Left ventricle myocardium superior (tissue), 1 donor: ENCODE measurements at regions of chr11 and their contacts with region 1.

Region 1: DNA sequence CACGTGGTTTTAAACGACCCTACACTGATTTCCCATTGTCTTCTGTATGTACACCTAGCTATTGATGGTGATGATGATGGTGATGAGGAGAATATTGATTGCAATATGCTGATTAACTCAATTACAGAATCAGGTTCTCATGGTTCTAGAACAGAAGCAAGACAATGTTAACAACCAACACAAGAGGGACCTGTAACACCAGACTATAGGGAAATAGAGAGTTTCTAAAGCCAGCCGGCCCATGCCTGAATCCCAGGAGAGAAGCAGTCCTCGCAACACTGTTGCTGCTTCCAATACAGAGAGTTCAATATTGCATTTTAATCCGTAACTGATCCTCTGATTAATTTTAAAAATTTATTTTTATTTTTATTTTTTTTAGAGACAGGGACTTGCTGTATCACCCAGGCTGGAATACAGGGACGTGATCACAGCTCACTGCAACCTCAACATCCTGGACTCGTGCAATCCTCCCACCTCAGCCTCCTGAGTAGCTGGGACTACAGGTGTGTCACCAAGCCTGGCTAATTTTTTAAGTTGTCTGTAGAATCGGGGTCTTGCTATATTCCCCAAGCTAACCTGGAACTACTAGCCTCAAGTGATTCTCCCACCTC is 22.2 kb upstream of the UBASH3B start:
- DNase-seq: no peak
- ATAC-seq: peak; percentile 61

Region 2: DNA sequence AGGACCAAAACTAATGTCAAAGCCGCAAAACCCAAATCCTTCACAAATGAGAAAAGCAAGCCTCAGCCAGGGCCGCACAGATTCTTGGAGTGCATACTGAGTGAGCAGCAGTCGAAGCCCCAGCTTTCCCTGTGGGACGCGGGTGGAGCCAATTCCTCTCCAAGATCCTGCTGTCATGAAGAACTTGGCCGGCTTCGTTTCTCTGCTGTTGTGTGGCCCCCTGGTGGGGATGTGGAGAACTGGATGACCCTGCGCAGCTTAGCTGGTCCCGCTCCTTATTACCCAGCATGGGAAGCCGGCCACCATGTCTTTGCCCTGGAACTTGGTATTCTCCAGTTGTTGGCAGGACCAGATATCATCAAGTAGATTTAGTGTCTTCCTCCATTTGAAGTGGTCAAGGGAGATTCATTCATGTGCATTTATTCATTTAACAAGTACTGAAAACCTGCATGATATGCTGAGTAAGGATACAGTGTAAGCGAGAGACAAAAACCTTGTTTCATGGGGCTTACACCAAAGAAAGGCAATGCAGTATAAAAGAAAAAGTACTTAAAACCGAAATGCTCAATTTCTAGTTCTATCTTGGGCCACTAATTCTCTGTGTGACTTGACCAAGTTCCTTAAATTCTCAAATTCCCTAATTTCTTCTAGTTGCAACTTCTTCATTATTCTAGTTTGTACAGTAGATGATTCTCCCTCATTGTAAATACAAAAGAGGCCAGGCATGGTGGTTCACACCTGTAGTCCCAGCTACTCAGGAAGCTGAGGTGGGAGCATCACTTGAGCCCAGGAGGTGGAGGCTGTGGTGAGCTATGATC is 148.3 kb after region 1 on chr11:
- intact Hi-C with region 1: loop called (anchors 5 kb)
- DNase-seq: peak; percentile 88
- ATAC-seq: peak; percentile 98

Region 3: GRCh38 chr11:122853971-122854446 is 220.7 kb after region 1 on chr11:
- intact Hi-C with region 1: loop called (anchors 10 kb)
- DNase-seq: no peak
- ATAC-seq: no peak